Astrocyte of the cerebellum (primary cell): ENCODE measurements at regions of chr10 and their contacts with region 1.

Region 1: DNA sequence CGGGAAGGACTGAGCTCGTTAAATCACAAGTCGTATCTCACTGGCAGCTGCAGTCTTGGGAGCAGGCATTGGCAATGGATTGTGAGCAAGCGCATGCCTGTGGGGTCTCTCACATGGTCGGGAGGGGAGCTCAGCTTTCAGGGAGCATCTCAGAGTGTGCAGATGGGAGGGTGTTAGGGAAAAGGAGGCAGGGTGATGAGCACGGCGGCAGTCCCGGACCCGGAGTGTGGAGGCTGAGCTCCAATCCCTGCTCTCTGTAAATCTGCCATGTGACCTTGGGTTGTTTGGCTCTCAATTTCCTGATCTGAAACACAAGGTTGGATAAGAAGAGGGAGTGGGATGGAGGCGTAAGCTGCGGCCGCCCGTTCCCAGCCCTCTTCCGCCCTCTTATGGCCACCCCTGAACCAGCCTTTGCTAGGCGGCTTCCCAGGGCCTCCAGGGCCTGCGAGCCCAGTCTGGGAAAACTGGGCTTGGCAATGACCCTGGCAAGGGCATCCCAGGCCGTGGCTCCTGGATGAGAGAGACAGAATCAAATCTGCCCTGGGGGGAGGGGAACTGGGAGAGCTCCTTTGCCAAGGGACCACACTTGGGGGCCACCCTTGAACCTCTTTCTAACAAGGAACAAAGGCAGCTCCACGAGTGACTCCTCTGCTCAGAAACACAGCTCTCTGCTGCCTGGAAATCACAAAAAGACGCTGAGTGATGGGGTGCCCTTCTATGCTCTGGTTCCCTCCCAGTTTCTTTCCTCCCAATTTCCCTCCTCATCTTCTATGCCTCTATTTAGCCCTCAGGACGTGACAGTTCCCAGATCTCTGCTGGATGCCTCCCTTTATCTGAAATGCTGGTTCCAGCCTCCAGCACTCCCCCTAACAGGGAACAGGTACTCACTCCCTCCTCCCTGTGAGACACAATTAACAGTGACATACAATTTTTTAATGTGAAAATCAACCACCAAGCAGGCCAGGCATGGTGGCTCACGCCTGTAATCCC is 41.7 kb upstream of the LOXL4 start:
- DNase-seq: peak; percentile 52
- H3K4me3 ChIP-seq: no peak overlapping the region
- CTCF ChIP-seq: peak; percentile 72

Region 2: GRCh38 chr10:98231417-98231816 is 78.2 kb before region 1 on chr10:
- in situ Hi-C with region 1: loop called (anchors 5 kb)
- DNase-seq: no peak
- H3K4me3 ChIP-seq: no peak overlapping the region
- CTCF ChIP-seq: no peak

Region 3: GRCh38 chr10:98340261-98340939 is 30.7 kb after region 1 on chr10:
- in situ Hi-C with region 1: no loop called
- DNase-seq: no peak
- H3K4me3 ChIP-seq: no peak overlapping the region
- CTCF ChIP-seq: no peak

Region 4: GRCh38 chr10:98404571-98405359 is 95.1 kb after region 1 on chr10:
- in situ Hi-C with region 1: loop called (anchors 5 kb)
- DNase-seq: no peak
- H3K4me3 ChIP-seq: no peak overlapping the region
- CTCF ChIP-seq: no peak